ENCODE measurements at regions of chr6 and their contacts with region 1.

Region 1: GRCh38 chr6:33147807-33148666 is 44.2 kb downstream of the COL11A2 start:
- DNase-seq: peak; percentile 54
- ATAC-seq: peak; percentile 75
- H3K4me3 ChIP-seq: no peak overlapping the region
- H3K27ac ChIP-seq: no peak overlapping the region
- H3K4me1 ChIP-seq: 0 out of 4 replicates have a peak, but pooled peaks cover 0 to 6% of the 10 kb centered on the region in 2 experiments
- H3K27me3 ChIP-seq: no peaks in the 10 kb centered on the region
- CTCF ChIP-seq: peak; percentile 78 to 85 (median 79)
- POLR2A ChIP-seq: no peak
- RAD21 ChIP-seq: peak; percentile 71

Region 2: DNA sequence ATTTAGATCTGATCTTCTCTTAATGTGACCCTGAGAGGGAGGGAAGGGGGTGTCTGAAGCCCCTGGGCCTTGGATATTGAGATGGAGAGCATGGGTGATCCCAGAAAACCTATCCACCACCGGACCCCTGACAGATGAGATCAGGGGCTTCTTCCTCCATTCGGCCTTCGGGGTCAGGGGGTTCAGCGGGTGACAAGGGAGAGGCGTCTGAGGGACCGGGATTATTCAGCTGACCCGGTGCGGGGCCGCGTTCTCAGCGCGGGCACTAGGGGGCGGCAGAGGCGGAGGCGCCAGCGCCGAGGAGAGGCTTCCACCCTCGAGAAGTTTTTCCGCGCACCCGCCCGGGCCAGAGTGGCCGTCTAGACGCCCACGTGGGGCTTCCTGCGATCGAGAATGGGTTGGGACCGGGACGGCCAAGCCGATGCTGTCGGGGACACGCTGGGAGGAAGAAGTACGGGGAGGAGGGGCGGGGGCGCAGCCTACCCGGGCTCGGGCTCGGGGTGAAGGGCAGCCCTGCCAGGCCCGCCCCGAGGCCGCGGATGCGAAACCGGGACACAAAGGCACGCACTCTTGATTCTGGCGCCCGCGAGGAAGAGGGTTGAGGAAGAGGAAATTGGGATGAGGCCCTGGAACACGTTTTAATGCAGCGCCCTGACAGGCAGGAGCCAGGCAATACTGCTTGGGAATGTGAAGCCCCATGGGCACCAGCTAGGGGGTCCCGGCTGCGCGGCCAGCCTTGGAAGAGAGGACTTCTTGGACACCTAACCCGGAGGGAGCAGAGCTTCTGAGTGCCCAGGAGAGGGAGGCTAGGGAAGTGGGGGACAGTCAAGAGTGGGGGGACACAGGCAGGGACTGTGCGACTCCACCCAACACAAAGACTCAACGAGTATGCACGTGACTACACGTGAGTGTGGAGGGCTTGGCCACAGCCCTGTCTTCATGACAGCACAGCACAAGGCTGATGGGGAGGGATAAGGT is 13.6 kb after region 1 on chr6:
- CTCF ChIA-PET with region 1: interaction called, 31 read pairs
- POLR2A ChIA-PET with region 1: no interaction called
- RAD21 ChIA-PET with region 1: interaction called in 1 of 2 experiments, 3 read pairs
- intact Hi-C with region 1: no loop called
- DNase-seq: peak; percentile 18
- ATAC-seq: peak; percentile 89
- H3K4me3 ChIP-seq: peak overlapping the region; percentile 52 to 61
- H3K27ac ChIP-seq: peak overlapping the region; percentile 40
- H3K4me1 ChIP-seq: peaks cover 11 to 29% of the 10 kb centered on the region in 2 experiments
- H3K27me3 ChIP-seq: no peaks in the 10 kb centered on the region
- CTCF ChIP-seq: peak; percentile 72 to 91 (median 90); a peak in 5 of 6 replicates
- POLR2A ChIP-seq: peak; percentile 17
- RAD21 ChIP-seq: peak; percentile 68

Region 3: DNA sequence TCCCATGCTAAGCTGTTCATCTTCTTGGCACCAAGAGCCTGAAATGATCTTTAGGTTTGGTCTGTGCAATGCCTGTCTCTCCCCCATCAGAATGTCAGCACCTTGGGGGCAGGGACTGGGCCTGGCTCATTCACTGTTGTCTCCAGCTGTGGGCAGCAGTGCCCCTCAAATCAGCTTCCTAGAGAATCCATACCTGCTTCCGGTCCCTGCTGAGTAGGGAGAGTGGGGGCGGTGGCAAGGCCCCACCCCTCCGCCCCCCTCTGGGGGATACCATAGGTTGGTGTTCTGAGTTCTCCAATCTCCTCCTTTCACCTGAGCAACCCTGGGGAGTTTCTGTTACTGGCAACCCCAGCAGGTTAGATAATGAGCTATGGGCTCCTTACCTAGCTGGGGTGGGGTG is 1427.3 kb after region 1 on chr6:
- CTCF ChIA-PET with region 1: no interaction called
- POLR2A ChIA-PET with region 1: no interaction called
- RAD21 ChIA-PET with region 1: no interaction called
- intact Hi-C with region 1: no loop called
- DNase-seq: no peak
- ATAC-seq: peak; percentile 20; the same call in 1 of the 2 replicates
- H3K4me3 ChIP-seq: no peak overlapping the region
- H3K27ac ChIP-seq: no peak overlapping the region
- H3K4me1 ChIP-seq: no peaks in the 10 kb centered on the region
- H3K27me3 ChIP-seq: no peaks in the 10 kb centered on the region
- CTCF ChIP-seq: no peak
- POLR2A ChIP-seq: no peak
- RAD21 ChIP-seq: no peak